CD4-positive, alpha-beta T cell (primary cell): ENCODE measurements at regions of chrX and their contacts with region 1.

Region 1: DNA sequence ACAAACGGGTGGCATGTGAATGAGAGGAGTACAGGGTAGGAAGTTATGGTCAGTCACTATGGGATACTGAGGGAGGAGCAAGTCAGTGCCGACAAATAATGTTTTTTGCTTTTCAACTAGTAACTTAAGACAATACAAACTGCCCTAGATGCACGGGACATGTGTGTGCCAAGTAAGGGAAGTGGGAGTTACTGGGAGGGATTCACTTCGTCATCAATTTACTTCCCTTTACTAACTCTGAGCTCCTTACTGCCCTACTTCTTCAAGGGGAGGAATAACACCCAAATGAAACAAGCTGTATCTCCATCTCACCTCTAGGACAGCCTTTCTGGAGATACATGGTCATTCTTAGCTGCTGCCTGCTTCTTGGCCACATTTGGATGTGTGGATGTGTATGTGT is 97.7 kb downstream of the DGKK start:
- DNase-seq: no peak
- ATAC-seq: no peak
- H3K4me3 ChIP-seq: no peak overlapping the region
- H3K4me3 Mint-ChIP-seq: no peak overlapping the region
- H3K27ac ChIP-seq: no peak overlapping the region
- H3K27ac Mint-ChIP-seq: no peak overlapping the region
- H3K4me1 ChIP-seq: no peaks in the 10 kb centered on the region
- H3K4me1 Mint-ChIP-seq: no peaks in the 10 kb centered on the region
- H3K27me3 ChIP-seq: no peaks in the 10 kb centered on the region
- H3K27me3 Mint-ChIP-seq: no peaks in the 10 kb centered on the region
- CTCF ChIP-seq: no peak

Region 2: GRCh38 chrX:50154429-50154828 is 218.5 kb before region 1 on chrX:
- CTCF ChIA-PET with region 1: no interaction called
- POLR2A ChIA-PET with region 1: no interaction called
- intact Hi-C with region 1: no loop called
- DNase-seq: no peak
- ATAC-seq: no peak
- H3K4me3 ChIP-seq: no peak overlapping the region
- H3K4me3 Mint-ChIP-seq: no peak overlapping the region
- H3K27ac ChIP-seq: no peak overlapping the region
- H3K27ac Mint-ChIP-seq: no peak overlapping the region
- H3K4me1 ChIP-seq: no peaks in the 10 kb centered on the region
- H3K4me1 Mint-ChIP-seq: no peaks in the 10 kb centered on the region
- H3K27me3 ChIP-seq: no peaks in the 10 kb centered on the region
- H3K27me3 Mint-ChIP-seq: no peaks in the 10 kb centered on the region
- CTCF ChIP-seq: no peak

Region 3: GRCh38 chrX:50428174-50428573 is 55.2 kb after region 1 on chrX:
- CTCF ChIA-PET with region 1: no interaction called
- POLR2A ChIA-PET with region 1: no interaction called
- intact Hi-C with region 1: loop called in 1 of 2 experiments (anchors 10 kb)
- DNase-seq: no peak
- ATAC-seq: no peak
- H3K4me3 ChIP-seq: no peak overlapping the region
- H3K4me3 Mint-ChIP-seq: no peak overlapping the region
- H3K27ac ChIP-seq: no peak overlapping the region
- H3K27ac Mint-ChIP-seq: no peak overlapping the region
- H3K4me1 ChIP-seq: no peaks in the 10 kb centered on the region
- H3K4me1 Mint-ChIP-seq: no peaks in the 10 kb centered on the region
- H3K27me3 ChIP-seq: no peaks in the 10 kb centered on the region
- H3K27me3 Mint-ChIP-seq: peaks cover 13% of the 10 kb centered on the region
- CTCF ChIP-seq: no peak

Region 4: DNA sequence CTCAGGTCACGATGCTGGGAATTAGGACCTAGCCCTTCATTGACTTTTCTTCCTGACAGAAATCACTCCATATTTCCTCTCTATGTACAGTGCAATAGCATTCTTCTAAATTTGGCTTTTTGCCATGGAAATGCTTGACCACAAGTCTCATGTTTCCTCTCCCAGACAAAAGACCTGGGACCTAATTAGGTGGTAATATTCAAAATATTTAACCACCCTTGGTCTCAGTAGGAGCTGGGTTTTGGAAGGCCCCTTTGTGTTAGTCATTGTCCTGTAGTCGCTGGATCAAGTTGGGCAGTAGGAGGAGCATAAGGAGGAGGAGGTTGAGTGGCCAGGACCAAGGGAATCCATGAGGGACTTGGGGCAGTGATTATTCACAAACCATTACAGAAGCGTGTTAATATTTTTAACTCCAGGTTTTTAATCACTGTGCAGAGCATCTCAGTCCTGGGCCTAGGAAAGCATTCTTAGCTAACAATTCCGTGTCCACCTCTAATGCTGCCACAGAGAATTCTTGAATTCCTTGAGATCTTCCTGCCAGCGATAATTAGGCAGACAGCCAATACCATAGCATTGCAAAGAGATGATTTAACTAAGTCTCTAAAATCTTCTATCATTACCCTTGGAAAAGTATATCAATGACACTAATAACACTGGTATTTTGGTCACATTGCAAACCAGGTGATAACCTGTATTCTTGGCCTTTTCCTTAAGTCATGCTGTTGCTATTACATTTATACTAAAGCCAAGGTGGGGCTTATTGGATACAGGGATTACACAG is 466.0 kb after region 1 on chrX:
- CTCF ChIA-PET with region 1: no interaction called
- POLR2A ChIA-PET with region 1: no interaction called
- intact Hi-C with region 1: no loop called
- DNase-seq: no peak
- ATAC-seq: no peak
- H3K4me3 ChIP-seq: no peak overlapping the region
- H3K4me3 Mint-ChIP-seq: no peak overlapping the region
- H3K27ac ChIP-seq: no peak overlapping the region
- H3K27ac Mint-ChIP-seq: no peak overlapping the region
- H3K4me1 ChIP-seq: no peaks in the 10 kb centered on the region
- H3K4me1 Mint-ChIP-seq: no peaks in the 10 kb centered on the region
- H3K27me3 ChIP-seq: no peaks in the 10 kb centered on the region
- H3K27me3 Mint-ChIP-seq: no peaks in the 10 kb centered on the region
- CTCF ChIP-seq: no peak